Left ventricle myocardium inferior (tissue), 1 donor: ENCODE measurements at regions of chr20 and their contacts with region 1.

Region 1: GRCh38 chr20:17536944-17537444 is 5.8 kb upstream of the BFSP1 start:
- DNase-seq: peak; percentile 48
- H3K4me3 ChIP-seq: no peak overlapping the region
- H3K27ac ChIP-seq: no peak overlapping the region
- H3K4me1 ChIP-seq: peaks cover 1% of the 10 kb centered on the region
- H3K27me3 ChIP-seq: no peaks in the 10 kb centered on the region
- CTCF ChIP-seq: peak; percentile 93

Region 2: GRCh38 chr20:17617551-17618223 is 80.7 kb after region 1 on chr20:
- intact Hi-C with region 1: loop called (anchors 10 kb)
- DNase-seq: peak; percentile 56
- H3K4me3 ChIP-seq: no peak overlapping the region
- H3K27ac ChIP-seq: no peak overlapping the region
- H3K4me1 ChIP-seq: peaks cover 55% of the 10 kb centered on the region
- H3K27me3 ChIP-seq: no peaks in the 10 kb centered on the region
- CTCF ChIP-seq: peak; percentile 83